Calu3 (cell line): ENCODE measurements at regions of chr6 and their contacts with region 1.

Region 1: GRCh38 chr6:31007694-31008093 is 2.6 kb upstream of the MUC22 start:
- DNase-seq: peak; percentile 72
- H3K4me3 Mint-ChIP-seq: peak overlapping the region; percentile 27
- H3K27ac Mint-ChIP-seq: peak overlapping the region; percentile 85
- H3K4me1 Mint-ChIP-seq: peaks cover 70% of the 10 kb centered on the region
- H3K27me3 Mint-ChIP-seq: no peaks in the 10 kb centered on the region
- CTCF ChIP-seq: no peak

Region 2: GRCh38 chr6:30935018-30935417 is 72.7 kb before region 1 on chr6:
- CTCF ChIA-PET with region 1: interaction called, 13 read pairs
- intact Hi-C with region 1: loop called (anchors 10 kb)
- DNase-seq: peak; percentile 83
- H3K4me3 Mint-ChIP-seq: no peak overlapping the region
- H3K27ac Mint-ChIP-seq: peak overlapping the region; percentile 67
- H3K4me1 Mint-ChIP-seq: peaks cover 68% of the 10 kb centered on the region
- H3K27me3 Mint-ChIP-seq: no peaks in the 10 kb centered on the region
- CTCF ChIP-seq: no peak

Region 3: GRCh38 chr6:31037682-31038081 is 30.0 kb after region 1 on chr6:
- CTCF ChIA-PET with region 1: interaction called, 5 read pairs
- intact Hi-C with region 1: loop called (anchors 2 kb)
- DNase-seq: no peak
- H3K4me3 Mint-ChIP-seq: no peak overlapping the region
- H3K27ac Mint-ChIP-seq: no peak overlapping the region
- H3K4me1 Mint-ChIP-seq: peaks cover 45% of the 10 kb centered on the region
- H3K27me3 Mint-ChIP-seq: peaks cover 11% of the 10 kb centered on the region
- CTCF ChIP-seq: no peak